Activated CD4-positive, alpha-beta memory T cell treated with anti-CD3 and anti-CD28 coated beads for 36 hours (primary cell): ENCODE measurements at regions of chr5 and their contacts with region 1.

Region 1: GRCh38 chr5:174418928-174419796 is 305.2 kb upstream of the MSX2 start:
- DNase-seq: peak; percentile 89
- H3K4me3 Mint-ChIP-seq: peak overlapping the region; percentile 60
- H3K27ac Mint-ChIP-seq: no peak overlapping the region
- H3K4me1 Mint-ChIP-seq: peaks cover 11% of the 10 kb centered on the region
- H3K27me3 Mint-ChIP-seq: peaks cover 11% of the 10 kb centered on the region

Region 2: DNA sequence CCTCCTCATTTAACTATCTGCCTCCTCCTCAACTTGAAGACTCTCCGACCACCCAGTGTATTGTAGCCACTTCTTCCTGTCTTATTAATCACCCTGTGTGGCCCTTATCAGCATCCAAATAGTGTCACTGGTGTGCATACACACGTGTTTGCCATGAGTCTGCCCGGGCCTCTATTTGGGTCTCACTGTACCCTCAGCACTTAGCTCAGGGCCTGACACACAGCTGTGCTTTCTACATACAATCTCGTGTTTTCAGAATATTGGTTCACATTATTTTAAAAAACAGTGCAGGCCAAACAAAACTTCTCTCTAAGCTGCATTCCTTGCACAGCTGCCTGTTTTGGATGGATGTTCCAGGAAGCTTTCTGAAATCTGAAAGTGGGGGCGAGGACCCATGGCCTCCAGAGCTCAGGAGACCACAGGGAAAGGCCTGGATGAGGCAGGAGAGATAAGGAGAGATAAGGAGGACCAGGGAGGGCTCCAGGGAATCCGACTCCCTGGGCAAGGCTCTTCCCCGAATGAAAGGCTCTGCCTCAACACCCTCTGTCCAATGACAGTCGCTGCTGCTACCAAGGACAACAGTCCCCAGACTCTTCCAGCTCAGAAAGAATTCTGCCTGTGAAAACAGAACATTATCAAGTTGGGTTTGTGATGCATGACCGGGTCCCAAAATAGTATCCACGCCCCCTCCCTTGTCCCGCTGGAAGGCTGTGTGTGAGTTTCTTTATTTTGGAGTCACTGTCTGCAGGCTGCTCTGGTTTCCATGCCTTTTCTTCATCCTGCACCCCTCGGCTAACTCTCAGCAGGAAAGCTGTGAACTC is 118.0 kb before region 1 on chr5:
- CTCF ChIA-PET with region 1: no interaction called
- POLR2A ChIA-PET with region 1: no interaction called
- intact Hi-C with region 1: no loop called
- DNase-seq: no peak
- H3K4me3 Mint-ChIP-seq: no peak overlapping the region
- H3K27ac Mint-ChIP-seq: no peak overlapping the region
- H3K4me1 Mint-ChIP-seq: no peaks in the 10 kb centered on the region
- H3K27me3 Mint-ChIP-seq: peaks cover 9% of the 10 kb centered on the region

Region 3: GRCh38 chr5:174434761-174435160 is 15.6 kb after region 1 on chr5:
- CTCF ChIA-PET with region 1: interaction called, 12 read pairs
- POLR2A ChIA-PET with region 1: no interaction called
- intact Hi-C with region 1: no loop called
- DNase-seq: no peak
- H3K4me3 Mint-ChIP-seq: no peak overlapping the region
- H3K27ac Mint-ChIP-seq: no peak overlapping the region
- H3K4me1 Mint-ChIP-seq: peaks cover 6% of the 10 kb centered on the region
- H3K27me3 Mint-ChIP-seq: peaks cover 3% of the 10 kb centered on the region

Region 4: GRCh38 chr5:174459101-174459702 is 40.0 kb after region 1 on chr5:
- CTCF ChIA-PET with region 1: interaction called, 10 read pairs
- POLR2A ChIA-PET with region 1: no interaction called
- intact Hi-C with region 1: no loop called
- DNase-seq: no peak
- H3K4me3 Mint-ChIP-seq: no peak overlapping the region
- H3K27ac Mint-ChIP-seq: no peak overlapping the region
- H3K4me1 Mint-ChIP-seq: peaks cover 23% of the 10 kb centered on the region
- H3K27me3 Mint-ChIP-seq: no peaks in the 10 kb centered on the region

Region 5: GRCh38 chr5:174735498-174736330 is 316.6 kb after region 1 on chr5:
- CTCF ChIA-PET with region 1: interaction called, 8 read pairs
- POLR2A ChIA-PET with region 1: no interaction called
- intact Hi-C with region 1: loop called (anchors 1 kb)
- DNase-seq: peak; percentile 37
- H3K4me3 Mint-ChIP-seq: no peak overlapping the region
- H3K27ac Mint-ChIP-seq: no peak overlapping the region
- H3K4me1 Mint-ChIP-seq: peaks cover 10% of the 10 kb centered on the region
- H3K27me3 Mint-ChIP-seq: peaks cover 66% of the 10 kb centered on the region

Region 6: GRCh38 chr5:174793684-174794328 is 374.6 kb after region 1 on chr5:
- CTCF ChIA-PET with region 1: interaction called, 42 read pairs
- POLR2A ChIA-PET with region 1: no interaction called
- intact Hi-C with region 1: no loop called
- DNase-seq: peak; percentile 69
- H3K4me3 Mint-ChIP-seq: no peak overlapping the region
- H3K27ac Mint-ChIP-seq: no peak overlapping the region
- H3K4me1 Mint-ChIP-seq: peaks cover 12% of the 10 kb centered on the region
- H3K27me3 Mint-ChIP-seq: peaks cover 48% of the 10 kb centered on the region

Region 7: DNA sequence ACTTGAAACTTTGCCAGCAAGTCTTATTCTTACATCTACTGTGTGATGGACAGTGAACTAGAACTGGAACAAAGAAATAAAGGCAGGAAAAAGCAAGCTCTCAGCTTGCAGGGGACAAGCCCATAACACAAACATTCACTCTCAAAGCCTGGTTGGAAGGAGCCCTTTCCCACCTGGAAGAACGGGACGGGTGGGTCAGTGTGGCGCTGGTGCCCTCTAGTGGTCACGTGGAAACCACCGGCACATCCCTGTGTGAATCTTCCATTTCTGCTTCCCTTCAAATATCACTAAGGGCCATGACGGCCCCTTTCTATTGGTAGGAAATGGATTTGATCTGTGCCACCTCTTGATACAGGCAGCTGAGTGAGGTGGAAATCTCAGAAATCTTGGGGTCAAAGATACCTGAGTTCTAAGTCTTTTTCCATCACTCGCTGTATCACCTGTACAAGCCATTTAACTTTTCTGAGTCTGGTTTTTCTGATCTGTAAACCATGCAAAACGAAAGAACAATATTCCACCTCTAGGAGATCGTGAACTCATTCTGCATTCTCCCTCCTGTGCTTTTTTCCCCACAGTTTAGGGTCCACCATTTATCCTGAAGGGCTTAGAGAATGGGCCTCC is 516.8 kb after region 1 on chr5:
- CTCF ChIA-PET with region 1: interaction called, 6 read pairs
- POLR2A ChIA-PET with region 1: no interaction called
- intact Hi-C with region 1: loop called (anchors 2 kb)
- DNase-seq: peak; percentile 51
- H3K4me3 Mint-ChIP-seq: no peak overlapping the region
- H3K27ac Mint-ChIP-seq: no peak overlapping the region
- H3K4me1 Mint-ChIP-seq: no peaks in the 10 kb centered on the region
- H3K27me3 Mint-ChIP-seq: peaks cover 25% of the 10 kb centered on the region